Right lobe of liver (tissue), 6 donors: ENCODE measurements at regions of chr16 and their contacts with region 1.

Region 1: DNA sequence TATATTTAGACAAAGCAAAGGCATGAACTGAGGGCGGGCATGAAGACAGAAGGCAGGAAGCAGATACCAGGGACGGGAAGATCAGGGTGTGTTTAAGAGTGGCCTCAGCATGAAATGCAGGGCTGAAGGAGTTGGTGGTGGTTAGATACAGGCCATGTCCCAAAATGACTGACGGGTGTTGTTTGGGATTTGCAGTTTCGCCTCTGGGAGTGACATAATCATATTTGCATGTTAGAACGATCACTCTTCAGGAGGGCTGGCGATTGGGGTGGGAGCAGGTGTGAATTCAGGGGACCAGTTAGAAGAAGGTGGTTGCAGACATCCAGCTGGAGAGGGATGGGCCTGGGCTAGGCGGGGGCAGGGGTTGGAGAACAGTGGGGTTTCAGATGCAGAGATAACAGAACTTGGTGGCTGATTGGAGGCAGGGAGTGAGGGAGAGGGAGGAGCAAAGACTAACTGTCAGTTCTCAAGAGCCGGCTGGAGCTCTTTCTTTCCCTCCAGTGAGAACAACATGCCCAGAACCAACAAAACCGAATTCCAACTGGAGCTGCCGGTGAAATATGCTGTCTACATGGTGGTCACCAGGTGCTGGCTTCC is 27.2 kb upstream of the ITGAX start:
- DNase-seq: no peak
- ATAC-seq: no peak
- H3K4me3 ChIP-seq: no peak overlapping the region
- H3K27ac ChIP-seq: no peak overlapping the region
- H3K4me1 ChIP-seq: no peaks in the 10 kb centered on the region
- H3K27me3 ChIP-seq: no peaks in the 10 kb centered on the region
- CTCF ChIP-seq: no peak
- POLR2A ChIP-seq: no peak

Region 2: GRCh38 chr16:31274831-31275816 is 52.6 kb before region 1 on chr16:
- intact Hi-C with region 1: loop called in 1 of 2 experiments (anchors 5 kb)
- DNase-seq: no peak
- ATAC-seq: no peak
- H3K4me3 ChIP-seq: no peak overlapping the region
- H3K27ac ChIP-seq: no peak overlapping the region
- H3K4me1 ChIP-seq: no peaks in the 10 kb centered on the region
- H3K27me3 ChIP-seq: no peaks in the 10 kb centered on the region
- CTCF ChIP-seq: no peak
- POLR2A ChIP-seq: no peak

Region 3: DNA sequence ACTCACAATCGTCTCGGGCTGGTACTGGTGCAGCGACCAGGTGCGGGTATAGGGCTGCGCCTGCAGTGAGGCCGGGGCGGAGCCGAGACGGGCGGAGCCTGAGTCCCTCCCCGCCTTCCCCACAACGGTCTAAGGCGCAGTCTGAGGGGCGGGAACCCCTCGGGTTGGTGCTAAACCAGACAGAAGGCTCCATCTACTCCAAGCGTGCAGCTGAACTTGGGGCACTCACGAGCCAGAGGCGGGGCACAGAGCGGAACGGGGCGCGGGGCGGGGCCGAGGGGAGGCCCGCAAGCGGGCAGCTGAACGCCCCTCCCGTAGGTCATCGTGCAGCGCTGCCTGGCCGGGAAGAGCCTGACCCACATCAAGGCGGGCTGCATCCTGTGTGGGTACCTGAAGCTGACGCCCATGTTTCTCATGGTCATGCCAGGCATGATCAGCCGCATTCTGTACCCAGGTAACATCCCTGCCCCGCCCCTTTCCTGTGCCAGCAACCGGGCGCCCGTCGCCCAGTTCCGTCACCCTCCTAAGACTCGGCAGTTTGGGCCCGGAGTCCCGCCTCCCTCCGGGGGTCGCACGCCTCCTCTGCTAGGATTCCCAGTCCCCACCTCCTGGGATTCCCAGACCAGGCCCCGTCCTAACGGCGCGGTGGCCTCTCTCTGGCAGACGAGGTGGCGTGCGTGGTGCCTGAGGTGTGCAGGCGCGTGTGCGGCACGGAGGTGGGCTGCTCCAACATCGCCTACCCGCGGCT is 160.2 kb after region 1 on chr16:
- intact Hi-C with region 1: no loop called
- DNase-seq: peak in 2 of 3 donors; percentile 65 to 66
- ATAC-seq: peak; percentile 78 to 82 (median 79)
- H3K4me3 ChIP-seq: peak overlapping the region; percentile 49 to 57 (median 50)
- H3K27ac ChIP-seq: no peak overlapping the region
- H3K4me1 ChIP-seq: peaks cover 0 to 15% (median 2%) of the 10 kb centered on the region in 4 donors
- H3K27me3 ChIP-seq: no peaks in the 10 kb centered on the region
- CTCF ChIP-seq: no peak
- POLR2A ChIP-seq: no peak